Naive thymus-derived CD4-positive, alpha-beta T cell (primary cell): ENCODE measurements at regions of chr22 and their contacts with region 1.

Region 1: GRCh38 chr22:41204992-41205900 is at the start of gene L3MBTL2:
- DNase-seq: peak; percentile 89 to 99 (median 97)
- ATAC-seq: peak; percentile 100
- H3K4me3 ChIP-seq: peak within 1 kb of the TSS; percentile 94
- H3K4me3 Mint-ChIP-seq: peak within 1 kb of the TSS; percentile 87 to 100 (median 96)
- H3K27ac ChIP-seq: peak within 1 kb of the TSS; percentile 85
- H3K27ac Mint-ChIP-seq: peak within 1 kb of the TSS; percentile 88 to 98 (median 92)
- H3K4me1 ChIP-seq: peaks cover 4 to 10% of the 10 kb centered on the region in 2 donors
- H3K4me1 Mint-ChIP-seq: peaks cover 10 to 40% (median 36%) of the 10 kb centered on the region in 7 donors
- H3K27me3 ChIP-seq: no peaks in the 10 kb centered on the region
- H3K27me3 Mint-ChIP-seq: peaks cover 0 to 26% (median 0%) of the 10 kb centered on the region in 5 donors
- total RNA-seq, gene L3MBTL2: 31.6 to 45.9 (median 43.3) TPM

Region 2: GRCh38 chr22:40694411-40694810 is 510.8 kb before region 1 on chr22:
- CTCF ChIA-PET with region 1: no interaction called
- POLR2A ChIA-PET with region 1: no interaction called
- intact Hi-C with region 1: no loop called
- DNase-seq: no peak
- ATAC-seq: no peak
- H3K4me3 ChIP-seq: no peak overlapping the region
- H3K4me3 Mint-ChIP-seq: no peak overlapping the region
- H3K27ac ChIP-seq: no peak overlapping the region
- H3K27ac Mint-ChIP-seq: peak overlapping the region in 3 of 9 donors; percentile 2 to 74 (median 63)
- H3K4me1 ChIP-seq: no peaks in the 10 kb centered on the region
- H3K4me1 Mint-ChIP-seq: peaks cover 0 to 7% (median 4%) of the 10 kb centered on the region in 7 donors
- H3K27me3 ChIP-seq: no peaks in the 10 kb centered on the region
- H3K27me3 Mint-ChIP-seq: peaks cover 0 to 13% (median 0%) of the 10 kb centered on the region in 5 donors

Region 3: DNA sequence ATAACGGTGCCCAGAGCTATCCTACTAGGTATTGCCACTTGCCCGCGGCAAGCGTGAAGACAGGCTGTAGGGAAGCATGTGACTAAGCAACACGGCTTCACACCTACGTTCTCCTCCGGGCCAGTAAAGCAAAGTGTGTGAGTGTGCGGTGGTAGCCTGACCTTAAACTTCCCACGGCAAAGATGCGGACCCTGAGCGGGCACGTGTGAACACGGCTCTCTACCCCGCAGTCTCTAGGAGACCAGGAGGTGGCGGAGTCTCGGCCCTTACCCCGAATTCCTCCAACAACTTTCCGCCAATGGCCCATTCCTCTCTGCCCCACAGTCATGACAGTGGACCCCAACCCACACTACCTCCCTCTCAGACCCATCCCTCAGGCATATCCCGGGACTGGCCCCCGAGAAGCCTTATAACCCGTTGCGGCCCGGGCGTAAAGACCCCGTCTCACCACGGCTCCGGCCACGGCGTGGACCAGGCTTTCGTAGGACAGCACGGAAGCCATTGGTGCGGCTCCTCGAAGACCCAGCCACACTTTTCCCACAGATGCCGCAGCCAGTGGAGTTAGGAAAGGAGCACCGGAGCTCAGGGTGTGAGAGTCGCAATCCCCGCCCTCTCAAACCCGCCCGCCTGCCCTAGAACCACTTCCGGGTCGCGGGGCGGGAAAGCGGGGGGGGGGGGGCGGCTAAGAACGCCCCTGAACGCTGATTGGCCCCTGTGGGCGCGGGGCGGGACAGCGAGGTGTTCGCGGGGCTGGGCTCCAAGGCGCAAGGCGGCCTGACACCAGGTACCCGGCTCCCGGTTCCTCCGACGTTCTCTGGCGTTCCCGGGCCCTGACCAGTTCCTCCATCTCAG is 386.3 kb before region 1 on chr22 and contains the start of gene SLC25A17:
- CTCF ChIA-PET with region 1: no interaction called
- POLR2A ChIA-PET with region 1: no interaction called
- intact Hi-C with region 1: loop called in 1 of 2 experiments (anchors 1 kb)
- DNase-seq: peak; percentile 71 to 88 (median 82)
- ATAC-seq: peak; percentile 95
- H3K4me3 ChIP-seq: peak within 1 kb of the TSS; percentile 100
- H3K4me3 Mint-ChIP-seq: peak within 1 kb of the TSS; percentile 79 to 99 (median 93)
- H3K27ac ChIP-seq: peak within 1 kb of the TSS; percentile 86
- H3K27ac Mint-ChIP-seq: peak within 1 kb of the TSS; percentile 57 to 96 (median 88)
- H3K4me1 ChIP-seq: peaks cover 9 to 26% of the 10 kb centered on the region in 2 donors
- H3K4me1 Mint-ChIP-seq: peaks cover 22 to 42% (median 37%) of the 10 kb centered on the region in 7 donors
- H3K27me3 ChIP-seq: no peaks in the 10 kb centered on the region
- H3K27me3 Mint-ChIP-seq: no peaks in the 10 kb centered on the region
- total RNA-seq, gene SLC25A17: 6.8 to 22.1 (median 13.1) TPM

Region 4: GRCh38 chr22:41157083-41157482 is 48.2 kb before region 1 on chr22:
- CTCF ChIA-PET with region 1: no interaction called
- POLR2A ChIA-PET with region 1: no interaction called
- intact Hi-C with region 1: no loop called
- DNase-seq: no peak
- ATAC-seq: no peak
- H3K4me3 ChIP-seq: no peak overlapping the region
- H3K4me3 Mint-ChIP-seq: no peak overlapping the region
- H3K27ac ChIP-seq: no peak overlapping the region
- H3K27ac Mint-ChIP-seq: peak overlapping the region in 2 of 9 donors; percentile 20 to 54
- H3K4me1 ChIP-seq: no peaks in the 10 kb centered on the region
- H3K4me1 Mint-ChIP-seq: peaks cover 0 to 8% (median 0%) of the 10 kb centered on the region in 7 donors
- H3K27me3 ChIP-seq: no peaks in the 10 kb centered on the region
- H3K27me3 Mint-ChIP-seq: no peaks in the 10 kb centered on the region

Region 5: GRCh38 chr22:41217553-41218157 is 12.4 kb after region 1 on chr22:
- CTCF ChIA-PET with region 1: no interaction called
- POLR2A ChIA-PET with region 1: interaction called, 3 read pairs
- intact Hi-C with region 1: loop called (anchors 1 kb)
- DNase-seq: peak in 8 of 9 donors; percentile 24 to 50 (median 41)
- ATAC-seq: peak; percentile 97
- H3K4me3 ChIP-seq: no peak overlapping the region
- H3K4me3 Mint-ChIP-seq: peak overlapping the region; percentile 20 to 76 (median 61)
- H3K27ac ChIP-seq: peak overlapping the region; percentile 47
- H3K27ac Mint-ChIP-seq: peak overlapping the region in 8 of 9 donors; percentile 32 to 89 (median 63)
- H3K4me1 ChIP-seq: peaks cover 4 to 14% of the 10 kb centered on the region in 2 donors
- H3K4me1 Mint-ChIP-seq: peaks cover 15 to 33% (median 19%) of the 10 kb centered on the region in 7 donors
- H3K27me3 ChIP-seq: no peaks in the 10 kb centered on the region
- H3K27me3 Mint-ChIP-seq: no peaks in the 10 kb centered on the region

Region 6: DNA sequence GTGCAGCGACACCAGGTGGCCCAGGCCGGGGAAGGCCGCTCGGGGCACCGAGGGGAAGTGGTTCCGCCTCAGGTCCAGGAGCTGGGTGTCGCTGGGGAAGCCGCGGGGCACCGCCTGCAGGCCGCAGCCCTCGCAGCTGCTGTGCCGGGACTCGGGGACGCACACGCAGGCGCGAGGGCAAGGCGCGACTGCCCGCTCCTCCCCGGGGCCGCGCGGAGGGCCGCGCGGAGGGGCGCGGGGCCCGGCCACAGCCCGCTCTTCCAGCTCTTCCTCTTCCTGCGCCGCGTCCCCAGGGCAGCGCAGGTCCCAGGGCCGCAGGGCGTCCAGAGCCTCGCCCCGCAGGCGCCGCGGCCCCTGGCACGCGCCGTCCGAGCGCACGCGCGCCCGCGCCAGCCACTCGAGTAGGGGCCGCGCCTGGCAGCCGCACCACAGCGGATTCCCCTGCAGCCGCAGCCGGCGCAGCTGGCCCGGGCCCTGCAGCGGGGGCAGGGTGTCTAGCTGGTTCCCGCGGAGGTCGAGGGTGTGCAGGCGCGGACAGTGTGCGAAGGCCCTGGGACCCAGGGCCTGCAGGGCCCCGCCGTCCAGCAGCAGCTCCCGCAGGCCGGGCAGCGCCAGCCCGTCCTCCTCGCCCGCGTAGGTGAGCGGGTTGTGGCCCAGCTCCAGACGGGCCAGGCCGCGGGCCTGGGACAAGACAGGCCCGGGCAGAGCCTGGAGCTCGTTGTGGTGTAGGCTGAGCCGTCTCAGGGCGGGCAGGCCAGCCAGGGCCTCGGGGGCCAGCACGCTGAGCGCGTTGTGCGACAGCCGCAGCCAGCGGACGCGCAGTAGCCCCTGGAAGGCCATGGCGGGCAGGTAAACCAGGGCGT is 32.7 kb after region 1 on chr22:
- CTCF ChIA-PET with region 1: no interaction called
- POLR2A ChIA-PET with region 1: no interaction called
- intact Hi-C with region 1: loop called in 1 of 2 experiments (anchors 2 kb)
- DNase-seq: peak; percentile 74 to 86 (median 84)
- ATAC-seq: peak; percentile 96
- H3K4me3 ChIP-seq: peak overlapping the region; percentile 10
- H3K4me3 Mint-ChIP-seq: peak overlapping the region in 9 of 10 donors; percentile 54 to 78 (median 73)
- H3K27ac ChIP-seq: peak overlapping the region; percentile 57
- H3K27ac Mint-ChIP-seq: peak overlapping the region in 2 of 9 donors; percentile 44 to 63
- H3K4me1 ChIP-seq: peaks cover 0 to 11% of the 10 kb centered on the region in 2 donors
- H3K4me1 Mint-ChIP-seq: peaks cover 5 to 19% (median 11%) of the 10 kb centered on the region in 7 donors
- H3K27me3 ChIP-seq: no peaks in the 10 kb centered on the region
- H3K27me3 Mint-ChIP-seq: peaks cover 0 to 2% (median 0%) of the 10 kb centered on the region in 5 donors